Gastrocnemius medialis (tissue), 4 donors: ENCODE measurements at regions of chr16 and their contacts with region 1.

Region 1: DNA sequence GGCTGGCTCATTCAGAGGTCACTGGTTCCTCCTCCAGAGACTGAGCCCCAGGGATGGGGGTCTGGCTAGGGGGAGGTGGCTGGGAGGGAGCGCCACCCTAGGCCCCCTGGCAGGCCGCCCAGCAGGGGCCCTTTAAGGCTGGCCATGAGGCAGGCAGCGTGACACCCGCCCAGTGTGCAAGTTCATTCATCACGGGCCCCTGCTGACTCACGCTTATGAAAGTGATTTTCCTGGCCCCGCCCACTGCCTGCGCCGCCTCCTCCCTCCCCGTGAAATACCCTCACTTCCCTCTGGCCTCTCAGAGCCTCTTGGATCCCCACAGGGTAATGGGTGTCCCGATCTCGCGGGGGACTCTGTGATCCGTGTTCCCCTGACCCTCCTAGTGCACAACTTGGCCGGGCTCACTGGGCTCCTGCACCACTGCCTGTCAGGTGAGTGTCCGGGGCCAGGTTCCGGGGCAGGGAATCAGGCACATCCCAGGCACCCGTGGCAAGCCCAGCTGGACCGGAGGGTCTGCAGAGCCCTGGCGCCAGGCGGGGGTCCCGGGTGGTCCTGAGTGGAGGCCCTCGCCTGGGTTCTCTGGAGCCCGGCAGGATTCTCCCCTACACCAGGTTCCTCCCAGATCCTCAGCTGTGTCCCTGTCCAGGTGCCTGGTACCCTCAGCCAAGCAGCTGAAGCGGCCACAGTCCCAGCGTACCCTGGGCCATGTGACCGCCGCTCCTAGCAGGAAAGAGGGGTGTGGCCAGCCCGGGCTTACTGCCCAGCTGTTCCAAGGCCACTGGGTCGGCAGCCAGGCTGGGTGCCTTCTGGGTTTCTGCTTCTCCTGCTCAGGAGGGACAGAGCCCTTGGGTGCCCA is at the start of gene OSGIN1:
- DNase-seq: peak; percentile 95 to 97
- ATAC-seq: peak; percentile 85 to 89
- H3K4me3 ChIP-seq: peak within 1 kb of the TSS; percentile 66 to 88 (median 77)
- H3K27ac ChIP-seq: peak within 1 kb of the TSS; percentile 93 to 100 (median 97)
- H3K4me1 ChIP-seq: peaks cover 32 to 48% of the 10 kb centered on the region in 2 donors
- H3K27me3 ChIP-seq: no peaks in the 10 kb centered on the region
- CTCF ChIP-seq: peak in 1 of 5 experiments; percentile 7
- POLR2A ChIP-seq: peak; percentile 95 to 96
- total RNA-seq, gene OSGIN1: 9.6 to 24.9 (median 13.2) TPM

Region 2: DNA sequence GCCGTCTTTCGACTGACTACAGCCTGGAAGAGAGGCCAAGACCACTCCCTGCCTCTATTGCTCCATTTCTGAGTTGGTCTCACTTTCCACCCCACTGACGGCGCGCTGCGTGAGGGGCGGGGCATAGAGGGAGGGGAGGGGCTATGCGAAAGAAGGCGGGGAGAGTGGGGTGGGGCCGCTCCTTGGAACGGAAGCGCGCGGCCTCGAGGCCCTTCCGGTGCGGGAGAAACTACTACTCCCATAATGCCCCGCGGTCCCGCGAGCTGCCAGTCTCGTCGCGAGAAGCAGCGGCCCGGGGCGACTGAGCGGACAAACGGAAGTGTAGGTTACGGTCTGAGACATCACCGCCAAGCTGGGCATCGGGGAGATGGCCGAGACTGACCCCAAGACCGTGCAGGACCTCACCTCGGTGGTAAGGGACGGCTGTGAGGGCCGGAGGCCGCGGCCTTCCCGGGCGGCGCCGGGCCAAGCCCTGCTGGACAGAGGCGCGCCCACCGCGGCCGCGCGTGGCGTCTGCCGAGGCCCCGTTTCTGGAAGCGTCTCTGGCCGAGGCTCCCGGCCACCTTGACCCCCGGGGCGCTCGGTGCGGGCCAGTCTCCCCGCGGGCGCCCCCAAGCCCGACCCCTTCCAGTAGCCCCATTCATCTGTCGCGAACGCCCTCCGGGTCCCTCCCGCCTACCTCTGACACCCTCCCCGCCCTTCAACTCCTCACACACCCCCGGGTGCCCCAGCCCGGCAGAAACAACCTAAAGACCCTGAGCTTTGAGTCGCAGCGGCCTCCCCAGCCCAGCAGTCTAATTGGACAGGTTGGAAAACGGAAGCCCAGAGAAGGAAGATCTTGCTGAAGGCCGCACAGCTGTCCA is 145.2 kb before region 1 on chr16 and contains the start of gene HSBP1:
- in situ Hi-C with region 1: loop called in 1 of 4 experiments (anchors 25 kb)
- intact Hi-C with region 1: no loop called
- DNase-seq: peak; percentile 89 to 94
- ATAC-seq: peak; percentile 96
- H3K4me3 ChIP-seq: peak within 1 kb of the TSS; percentile 85 to 96 (median 90)
- H3K27ac ChIP-seq: peak within 1 kb of the TSS; percentile 73 to 86 (median 84)
- H3K4me1 ChIP-seq: peaks cover 10 to 17% of the 10 kb centered on the region in 2 donors
- H3K27me3 ChIP-seq: no peaks in the 10 kb centered on the region
- CTCF ChIP-seq: peak in 2 of 5 experiments; percentile 13 to 20
- POLR2A ChIP-seq: peak; percentile 68
- total RNA-seq, gene HSBP1: 7.5 to 28.0 (median 8.7) TPM

Region 3: GRCh38 chr16:83898463-83899271 is 54.5 kb before region 1 on chr16 and contains the start of gene MLYCD:
- in situ Hi-C with region 1: no loop called
- intact Hi-C with region 1: loop called (anchors 1 kb)
- DNase-seq: peak; percentile 88 to 93
- ATAC-seq: peak; percentile 70 to 72
- H3K4me3 ChIP-seq: peak within 1 kb of the TSS; percentile 63 to 88 (median 68)
- H3K27ac ChIP-seq: peak within 1 kb of the TSS; percentile 91 to 97 (median 94)
- H3K4me1 ChIP-seq: peaks cover 39 to 47% of the 10 kb centered on the region in 2 donors
- H3K27me3 ChIP-seq: no peaks in the 10 kb centered on the region
- CTCF ChIP-seq: peak in 1 of 5 experiments; percentile 27
- POLR2A ChIP-seq: peak; percentile 94 to 97
- total RNA-seq, gene MLYCD: 10.3 to 20.8 (median 18.4) TPM

Region 4: GRCh38 chr16:83926726-83927397 is 26.3 kb before region 1 on chr16:
- in situ Hi-C with region 1: no loop called
- intact Hi-C with region 1: loop called (anchors 2 kb)
- DNase-seq: peak; percentile 42 to 64
- ATAC-seq: peak; percentile 83 to 86
- H3K4me3 ChIP-seq: no peak overlapping the region
- H3K27ac ChIP-seq: no peak overlapping the region
- H3K4me1 ChIP-seq: peaks cover 8 to 10% of the 10 kb centered on the region in 2 donors
- H3K27me3 ChIP-seq: no peaks in the 10 kb centered on the region
- CTCF ChIP-seq: peak; percentile 75 to 98 (median 92)
- POLR2A ChIP-seq: no peak

Region 5: GRCh38 chr16:84156342-84156784 is 203.2 kb after region 1 on chr16:
- in situ Hi-C with region 1: loop called in 1 of 4 experiments (anchors 25 kb)
- intact Hi-C with region 1: no loop called
- DNase-seq: no peak
- ATAC-seq: no peak
- H3K4me3 ChIP-seq: no peak overlapping the region
- H3K27ac ChIP-seq: no peak overlapping the region
- H3K4me1 ChIP-seq: no peaks in the 10 kb centered on the region
- H3K27me3 ChIP-seq: peaks cover 0 to 11% (median 3%) of the 10 kb centered on the region in 3 donors
- CTCF ChIP-seq: no peak
- POLR2A ChIP-seq: no peak

Region 6: DNA sequence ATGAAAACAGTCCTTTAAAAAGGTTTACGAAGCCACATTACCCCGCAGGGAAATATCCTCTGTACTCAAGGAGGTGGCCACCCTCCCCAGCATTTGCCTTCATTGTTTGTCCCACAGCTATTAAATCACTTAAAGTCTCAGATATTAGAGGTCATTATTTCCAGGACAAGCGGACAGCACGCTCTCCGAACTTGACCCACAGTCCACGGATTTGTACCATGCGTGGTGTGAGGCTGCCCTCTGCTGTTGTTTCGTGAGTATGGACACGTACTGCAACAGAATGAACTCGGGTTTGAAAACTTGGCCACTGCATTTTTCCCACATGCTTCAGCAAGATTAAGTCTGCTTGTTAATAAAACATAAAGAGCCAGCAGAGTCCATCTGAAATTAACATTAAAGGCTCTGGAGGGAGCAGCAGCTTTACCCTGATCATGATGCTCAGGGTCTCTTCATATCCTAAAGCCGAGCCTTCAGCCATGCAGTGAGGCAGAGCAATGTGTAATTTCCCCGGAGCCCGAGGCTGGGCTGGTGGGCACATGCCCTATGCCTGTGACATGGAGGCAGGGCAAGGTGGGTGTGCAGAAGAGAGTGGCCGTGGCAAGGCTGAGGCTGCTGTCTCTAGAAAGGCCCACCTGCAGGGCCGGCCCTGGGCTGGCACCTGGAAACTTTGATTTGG is 531.5 kb after region 1 on chr16:
- in situ Hi-C with region 1: loop called in 2 of 4 experiments (anchors 25 kb)
- intact Hi-C with region 1: no loop called
- DNase-seq: peak in 1 of 2 donors; percentile 22
- ATAC-seq: peak; percentile 56 to 65
- H3K4me3 ChIP-seq: no peak overlapping the region
- H3K27ac ChIP-seq: no peak overlapping the region
- H3K4me1 ChIP-seq: no peaks in the 10 kb centered on the region
- H3K27me3 ChIP-seq: no peaks in the 10 kb centered on the region
- CTCF ChIP-seq: peak; percentile 35 to 71 (median 61)
- POLR2A ChIP-seq: no peak